Gastrocnemius medialis (tissue), 4 donors: ENCODE measurements at regions of chr4 and their contacts with region 1.

Region 1: GRCh38 chr4:55675196-55675793 is 39.2 kb upstream of the NMU start:
- DNase-seq: no peak
- ATAC-seq: no peak
- H3K4me3 ChIP-seq: no peak overlapping the region
- H3K27ac ChIP-seq: no peak overlapping the region
- H3K4me1 ChIP-seq: no peaks in the 10 kb centered on the region
- H3K27me3 ChIP-seq: no peaks in the 10 kb centered on the region
- CTCF ChIP-seq: no peak
- POLR2A ChIP-seq: no peak

Region 2: GRCh38 chr4:55475394-55476243 is 199.7 kb before region 1 on chr4:
- in situ Hi-C with region 1: no loop called
- intact Hi-C with region 1: no loop called
- DNase-seq: no peak
- ATAC-seq: no peak
- H3K4me3 ChIP-seq: no peak overlapping the region
- H3K27ac ChIP-seq: no peak overlapping the region
- H3K4me1 ChIP-seq: no peaks in the 10 kb centered on the region
- H3K27me3 ChIP-seq: no peaks in the 10 kb centered on the region
- CTCF ChIP-seq: no peak
- POLR2A ChIP-seq: no peak

Region 3: GRCh38 chr4:55592014-55592413 is 83.3 kb before region 1 on chr4 and contains the start of gene PDCL2:
- in situ Hi-C with region 1: loop called in 1 of 4 experiments (anchors 25 kb)
- intact Hi-C with region 1: no loop called
- DNase-seq: no peak
- ATAC-seq: no peak
- H3K4me3 ChIP-seq: no peak within 1 kb of the TSS
- H3K27ac ChIP-seq: no peak within 1 kb of the TSS
- H3K4me1 ChIP-seq: no peaks in the 10 kb centered on the region
- H3K27me3 ChIP-seq: no peaks in the 10 kb centered on the region
- CTCF ChIP-seq: no peak
- POLR2A ChIP-seq: no peak
- total RNA-seq, gene PDCL2: not detected